ENCODE measurements at regions of chr16 and their contacts with region 1.

Region 1: GRCh38 chr16:27235055-27235937 is 32.0 kb downstream of the KDM8 start:
- DNase-seq: peak; percentile 88
- H3K4me3 Mint-ChIP-seq: peak overlapping the region; percentile 82
- H3K27ac Mint-ChIP-seq: peak overlapping the region; percentile 99
- H3K4me1 Mint-ChIP-seq: peaks cover 90% of the 10 kb centered on the region
- H3K27me3 Mint-ChIP-seq: no peaks in the 10 kb centered on the region

Region 2: DNA sequence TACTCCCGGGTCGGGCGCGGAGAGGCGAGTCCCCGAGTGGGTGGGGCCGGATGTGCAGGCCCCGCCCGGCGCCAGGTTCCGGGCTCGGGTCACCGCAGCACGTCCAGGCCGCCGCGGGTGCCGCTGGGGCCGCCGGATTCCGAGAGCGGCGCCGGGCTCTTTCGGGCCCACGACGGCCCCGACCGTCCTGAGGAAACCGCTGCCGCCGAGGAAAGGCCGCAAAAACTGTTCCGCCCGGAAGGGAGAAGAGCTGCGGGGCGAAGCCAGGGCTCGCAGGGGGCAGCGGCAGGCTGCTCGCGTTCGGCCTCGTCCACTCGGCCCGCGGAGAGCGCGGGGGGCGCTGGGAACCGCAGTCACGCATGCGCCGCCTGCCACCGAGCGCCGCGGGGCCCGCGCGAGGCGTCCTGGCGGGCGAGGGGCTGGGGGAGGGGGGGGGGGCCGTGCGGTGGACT is 1977.8 kb before region 1 on chr16 and contains the start of gene ZKSCAN2:
- intact Hi-C with region 1: loop called (anchors 10 kb)
- DNase-seq: peak; percentile 83
- H3K4me3 Mint-ChIP-seq: peak within 1 kb of the TSS; percentile 91
- H3K27ac Mint-ChIP-seq: peak within 1 kb of the TSS; percentile 97
- H3K4me1 Mint-ChIP-seq: peaks cover 53% of the 10 kb centered on the region
- H3K27me3 Mint-ChIP-seq: peaks cover 2% of the 10 kb centered on the region
- total RNA-seq, gene ZKSCAN2: 6.1 and 6.4 TPM in 2 replicates

Region 3: GRCh38 chr16:27179500-27180072 is 55.7 kb before region 1 on chr16:
- intact Hi-C with region 1: loop called (anchors 1 kb)
- DNase-seq: peak; percentile 78
- H3K4me3 Mint-ChIP-seq: no peak overlapping the region
- H3K27ac Mint-ChIP-seq: no peak overlapping the region
- H3K4me1 Mint-ChIP-seq: peaks cover 32% of the 10 kb centered on the region
- H3K27me3 Mint-ChIP-seq: peaks cover 11% of the 10 kb centered on the region

Region 4: GRCh38 chr16:27253526-27253930 is 18.2 kb after region 1 on chr16:
- intact Hi-C with region 1: loop called (anchors 1 kb)
- DNase-seq: no peak
- H3K4me3 Mint-ChIP-seq: peak overlapping the region; percentile 59
- H3K27ac Mint-ChIP-seq: peak overlapping the region; percentile 88
- H3K4me1 Mint-ChIP-seq: peaks cover 82% of the 10 kb centered on the region
- H3K27me3 Mint-ChIP-seq: no peaks in the 10 kb centered on the region

Region 5: GRCh38 chr16:27286451-27286850 is 51.2 kb after region 1 on chr16:
- intact Hi-C with region 1: loop called (anchors 1 kb)
- DNase-seq: no peak
- H3K4me3 Mint-ChIP-seq: no peak overlapping the region
- H3K27ac Mint-ChIP-seq: no peak overlapping the region
- H3K4me1 Mint-ChIP-seq: peaks cover 72% of the 10 kb centered on the region
- H3K27me3 Mint-ChIP-seq: peaks cover 6% of the 10 kb centered on the region

Region 6: DNA sequence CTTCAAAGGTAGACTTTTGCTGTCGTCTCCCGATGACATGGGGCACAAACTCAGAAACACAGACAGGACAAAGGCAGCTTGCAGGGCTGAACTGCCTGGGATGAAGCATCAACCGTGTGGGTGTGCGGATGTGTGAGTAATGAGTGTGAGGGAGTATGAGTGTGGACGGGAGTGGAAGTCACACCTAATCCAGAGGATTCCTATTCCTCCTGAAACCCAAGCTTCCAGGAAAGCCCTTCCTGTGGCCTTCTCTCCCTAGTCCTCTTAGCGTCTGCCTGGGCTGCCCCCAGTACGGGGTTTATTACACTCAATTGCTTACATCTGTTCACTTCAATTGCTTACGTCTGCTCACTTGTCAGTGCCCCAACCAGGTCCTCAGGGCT is 76.1 kb after region 1 on chr16:
- intact Hi-C with region 1: no loop called
- DNase-seq: no peak
- H3K4me3 Mint-ChIP-seq: no peak overlapping the region
- H3K27ac Mint-ChIP-seq: no peak overlapping the region
- H3K4me1 Mint-ChIP-seq: peaks cover 30% of the 10 kb centered on the region
- H3K27me3 Mint-ChIP-seq: peaks cover 3% of the 10 kb centered on the region

Region 7: DNA sequence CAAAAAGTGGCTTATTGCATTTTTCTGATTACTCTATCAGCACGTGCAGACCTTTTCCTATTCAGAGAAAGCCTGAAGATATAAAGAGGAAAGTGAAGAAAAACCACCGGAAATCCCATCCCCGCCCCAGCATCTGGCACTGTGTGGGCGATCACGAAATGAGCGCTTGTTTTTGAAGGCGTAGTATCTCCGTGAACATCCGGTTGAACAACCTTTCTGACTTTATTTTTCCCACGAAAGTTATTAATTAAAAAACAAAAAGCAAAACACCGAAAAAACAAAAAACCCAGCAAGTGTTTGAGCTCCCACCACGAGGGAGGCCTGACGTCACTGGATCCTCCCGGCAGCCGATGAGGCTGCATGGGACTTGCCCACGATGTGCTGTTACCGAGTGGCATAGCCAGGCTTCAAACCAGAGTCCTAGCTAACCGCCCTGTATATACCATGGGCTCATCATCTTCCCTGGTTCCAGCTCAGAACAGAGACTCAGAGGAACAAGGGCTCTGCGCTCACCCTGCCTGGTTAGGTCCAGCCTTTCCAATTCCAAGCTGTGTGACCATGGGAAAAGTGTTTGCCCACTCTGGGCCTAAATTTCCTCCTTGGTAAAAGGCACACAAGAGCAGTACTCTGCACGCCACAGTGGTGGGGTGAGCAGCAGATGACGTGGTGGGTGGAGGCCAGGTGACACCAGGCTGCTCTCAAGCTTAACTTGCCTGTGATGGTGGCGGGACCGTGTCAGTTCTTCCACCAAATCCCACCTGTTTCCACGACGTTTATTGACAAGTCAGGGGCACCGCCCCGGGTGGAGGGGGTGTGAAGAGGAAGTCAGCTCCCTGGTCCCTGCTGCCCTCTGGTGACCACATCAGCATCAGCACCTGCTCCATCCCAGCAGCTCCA is 132.4 kb after region 1 on chr16:
- intact Hi-C with region 1: loop called (anchors 1 kb)
- DNase-seq: peak; percentile 76
- H3K4me3 Mint-ChIP-seq: peak overlapping the region; percentile 56
- H3K27ac Mint-ChIP-seq: peak overlapping the region; percentile 96
- H3K4me1 Mint-ChIP-seq: peaks cover 67% of the 10 kb centered on the region
- H3K27me3 Mint-ChIP-seq: no peaks in the 10 kb centered on the region

Region 8: DNA sequence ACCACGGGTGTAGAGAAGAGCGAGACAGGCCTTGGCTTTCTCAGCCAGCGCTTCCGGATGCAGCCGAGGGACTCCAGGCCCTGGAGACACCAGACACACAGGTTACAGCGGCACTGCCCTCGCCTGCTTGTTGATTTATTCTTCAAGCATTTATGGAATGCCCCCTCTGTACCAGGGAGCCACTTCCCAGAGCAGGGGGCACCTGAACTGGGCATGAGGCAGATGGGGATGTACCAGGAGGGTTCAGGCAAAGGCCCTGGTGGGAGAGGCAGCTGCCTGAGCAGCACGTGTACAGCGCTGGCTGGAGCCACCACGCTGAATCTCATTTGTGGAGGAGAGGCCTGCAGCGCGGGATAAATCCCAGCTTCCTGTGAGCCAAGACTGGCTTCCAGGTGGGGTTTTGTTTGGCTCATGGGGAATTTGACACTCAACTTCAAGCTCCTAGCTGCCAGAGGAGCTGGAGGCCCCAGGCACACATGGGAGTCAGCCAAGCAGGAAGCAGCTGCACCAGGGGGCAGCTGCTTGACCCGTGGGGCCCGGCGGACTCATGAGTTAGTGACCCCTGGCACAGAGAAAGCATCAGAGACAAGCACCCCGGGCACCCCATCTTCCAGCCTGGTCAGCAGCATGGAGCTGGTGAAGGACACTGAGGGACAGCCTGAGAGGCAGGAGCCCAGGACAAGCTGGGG is 226.3 kb after region 1 on chr16:
- intact Hi-C with region 1: loop called (anchors 1 kb)
- DNase-seq: no peak
- H3K4me3 Mint-ChIP-seq: no peak overlapping the region
- H3K27ac Mint-ChIP-seq: no peak overlapping the region
- H3K4me1 Mint-ChIP-seq: peaks cover 22% of the 10 kb centered on the region
- H3K27me3 Mint-ChIP-seq: no peaks in the 10 kb centered on the region